Colonic mucosa (tissue), 4 donors: ENCODE measurements at regions of chr21 and their contacts with region 1.

Region 1: DNA sequence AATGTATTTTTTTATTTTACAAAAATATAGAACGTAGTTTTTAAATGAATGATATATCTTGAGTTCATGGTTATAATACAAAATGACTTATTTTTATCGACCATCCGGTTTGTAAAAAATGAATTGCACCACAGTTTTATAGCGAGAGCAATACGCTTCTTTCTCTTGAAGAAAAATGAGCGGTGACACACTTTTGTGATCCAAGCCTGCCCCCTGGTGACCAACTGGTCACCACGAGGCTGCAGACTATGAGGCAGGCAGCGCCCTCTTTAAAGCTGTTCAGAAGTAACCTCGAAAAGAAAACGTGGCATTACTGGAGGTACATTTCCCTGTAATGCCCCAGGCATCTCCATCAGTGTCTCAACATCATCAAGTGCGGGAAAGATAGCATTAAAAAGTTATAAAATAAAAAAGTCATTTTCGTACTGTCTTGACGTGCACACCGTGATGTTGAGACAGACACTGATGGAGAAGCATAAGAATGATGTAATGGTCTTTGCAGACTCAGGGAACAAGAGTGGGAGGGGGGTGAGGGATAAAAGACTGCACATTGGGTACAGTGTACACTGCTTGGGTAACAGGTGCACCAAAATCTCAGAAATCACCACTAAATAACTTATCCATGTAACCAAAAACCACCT is 734.2 kb upstream of the ADAMTS5 start:
- DNase-seq: peak; percentile 87
- H3K4me3 ChIP-seq: no peak overlapping the region
- H3K27ac ChIP-seq: no peak overlapping the region
- H3K4me1 ChIP-seq: no peaks in the 10 kb centered on the region
- H3K27me3 ChIP-seq: no peaks in the 10 kb centered on the region
- CTCF ChIP-seq: peak; percentile 65

Region 2: GRCh38 chr21:26850108-26850643 is 850.9 kb before region 1 on chr21:
- intact Hi-C with region 1: loop called (anchors 2 kb)
- DNase-seq: no peak
- H3K4me3 ChIP-seq: no peak overlapping the region
- H3K27ac ChIP-seq: no peak overlapping the region
- H3K4me1 ChIP-seq: peaks cover 10% of the 10 kb centered on the region
- H3K27me3 ChIP-seq: peaks cover 21% of the 10 kb centered on the region
- CTCF ChIP-seq: peak; percentile 67

Region 3: DNA sequence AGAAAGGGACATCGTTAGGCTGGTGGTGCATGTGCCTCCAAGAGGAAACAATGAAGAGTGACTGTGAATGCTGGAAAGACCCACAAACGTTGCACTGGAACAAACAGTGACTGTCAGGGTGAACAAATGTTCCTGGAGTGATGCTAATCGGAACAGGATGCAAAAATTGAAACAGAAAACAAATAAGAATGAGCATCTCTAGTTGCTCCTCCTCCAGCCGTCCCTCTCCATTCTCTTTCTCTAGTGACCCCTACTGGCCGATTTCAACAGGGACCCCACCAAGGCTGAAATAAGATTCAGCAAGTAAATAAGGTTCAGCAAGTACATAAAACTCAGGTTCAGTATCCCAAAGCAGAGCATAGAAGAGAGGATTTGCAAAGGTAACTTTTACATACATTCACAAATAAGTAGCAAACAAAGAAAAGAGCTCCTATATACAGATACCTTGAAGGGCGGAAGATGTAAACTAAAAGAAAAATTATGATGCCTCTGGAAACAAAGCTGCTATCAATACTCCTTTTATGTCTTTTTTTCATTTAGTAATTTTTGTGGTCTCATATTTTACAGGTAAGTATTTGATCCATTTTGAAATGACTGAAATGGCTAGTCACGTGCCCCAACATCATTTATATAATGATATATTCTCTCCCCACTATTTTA is 101.9 kb after region 1 on chr21:
- intact Hi-C with region 1: loop called (anchors 5 kb)
- DNase-seq: peak; percentile 53
- H3K4me3 ChIP-seq: no peak overlapping the region
- H3K27ac ChIP-seq: no peak overlapping the region
- H3K4me1 ChIP-seq: no peaks in the 10 kb centered on the region
- H3K27me3 ChIP-seq: no peaks in the 10 kb centered on the region
- CTCF ChIP-seq: peak; percentile 49